ENCODE measurements at regions of chr10 and their contacts with region 1.

Region 1: DNA sequence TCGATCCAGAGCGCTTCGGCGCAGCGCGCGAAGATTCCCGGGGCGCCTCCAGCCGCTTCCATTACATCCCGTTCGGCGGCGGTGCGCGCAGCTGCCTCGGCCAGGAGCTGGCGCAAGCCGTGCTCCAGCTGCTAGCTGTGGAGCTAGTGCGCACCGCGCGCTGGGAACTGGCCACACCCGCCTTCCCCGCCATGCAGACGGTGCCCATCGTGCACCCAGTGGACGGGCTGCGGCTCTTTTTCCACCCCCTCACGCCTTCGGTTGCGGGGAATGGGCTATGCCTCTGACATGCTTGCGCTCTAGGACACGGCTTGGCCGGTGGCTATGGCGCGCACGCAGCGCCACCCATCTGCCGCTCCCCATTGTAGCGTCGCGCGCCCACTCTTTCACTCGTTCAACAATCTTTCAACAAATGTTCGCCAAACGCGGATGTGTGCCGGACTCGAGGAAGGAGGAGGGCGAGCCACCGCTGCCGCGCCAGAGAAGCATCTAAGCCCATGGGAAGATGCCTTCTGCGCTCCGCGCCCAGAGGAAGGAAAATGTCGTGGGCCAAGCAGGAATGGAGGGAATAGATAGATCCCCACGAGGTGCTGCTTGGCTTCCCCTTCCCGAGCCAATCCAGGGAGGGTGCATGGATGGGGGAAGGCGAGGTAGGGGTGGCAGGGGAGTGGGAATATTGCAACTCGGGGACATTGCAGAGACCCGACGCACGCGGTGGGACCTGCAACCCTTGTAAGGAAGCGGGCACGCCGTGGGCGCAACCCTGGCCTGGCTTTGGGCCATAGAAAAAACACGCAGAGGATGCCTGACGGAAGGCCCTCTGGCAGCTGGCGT is 5.1 kb upstream of the CYP26A1 start:
- DNase-seq: peak in 1 of 2 experiments; percentile 82
- H3K4me3 ChIP-seq: peak overlapping the region; percentile 29 to 52 (median 38)
- H3K27ac ChIP-seq: no peak overlapping the region
- H3K4me1 ChIP-seq: peaks cover 0 to 32% (median 22%) of the 10 kb centered on the region in 4 experiments; a peak in 6 of 7 replicates
- H3K27me3 ChIP-seq: peaks cover 96 to 100% (median 99%) of the 10 kb centered on the region in 4 experiments
- CTCF ChIP-seq: peak in 2 of 3 experiments; percentile 17 to 39; a peak in 3 of 4 replicates
- EP300 ChIP-seq: no peak
- POLR2A ChIP-seq: no peak
- RAD21 ChIP-seq: peak in 1 of 2 experiments; percentile 28; a peak in 1 of 4 replicates

Region 2: GRCh38 chr10:92886334-92886961 is 182.2 kb before region 1 on chr10:
- CTCF ChIA-PET with region 1: interaction called, 13 read pairs
- POLR2A ChIA-PET with region 1: no interaction called
- DNase-seq: no peak
- H3K4me3 ChIP-seq: no peak overlapping the region
- H3K27ac ChIP-seq: no peak overlapping the region
- H3K4me1 ChIP-seq: no peaks in the 10 kb centered on the region; a peak in 1 of 7 replicates
- H3K27me3 ChIP-seq: no peaks in the 10 kb centered on the region
- CTCF ChIP-seq: no peak
- EP300 ChIP-seq: no peak
- POLR2A ChIP-seq: no peak
- RAD21 ChIP-seq: no peak

Region 3: GRCh38 chr10:93006435-93007039 is 62.1 kb before region 1 on chr10:
- CTCF ChIA-PET with region 1: interaction called, 20 read pairs
- POLR2A ChIA-PET with region 1: no interaction called
- DNase-seq: no peak
- H3K4me3 ChIP-seq: no peak overlapping the region
- H3K27ac ChIP-seq: no peak overlapping the region
- H3K4me1 ChIP-seq: no peaks in the 10 kb centered on the region
- H3K27me3 ChIP-seq: no peaks in the 10 kb centered on the region
- CTCF ChIP-seq: peak in 2 of 3 experiments; percentile 70 to 74; a peak in 3 of 4 replicates
- EP300 ChIP-seq: no peak
- POLR2A ChIP-seq: no peak
- RAD21 ChIP-seq: peak; percentile 79 to 82

Region 4: GRCh38 chr10:93115661-93116383 is 47.2 kb after region 1 on chr10:
- CTCF ChIA-PET with region 1: no interaction called
- POLR2A ChIA-PET with region 1: no interaction called
- DNase-seq: peak; percentile 53 to 94
- H3K4me3 ChIP-seq: no peak overlapping the region
- H3K27ac ChIP-seq: no peak overlapping the region; the same call in 1 of the 2 replicates
- H3K4me1 ChIP-seq: no peaks in the 10 kb centered on the region
- H3K27me3 ChIP-seq: peaks cover 0 to 2% (median 0%) of the 10 kb centered on the region in 4 experiments; a peak in 1 of 7 replicates
- CTCF ChIP-seq: peak; percentile 69 to 77 (median 72)
- EP300 ChIP-seq: no peak
- POLR2A ChIP-seq: no peak
- RAD21 ChIP-seq: peak; percentile 68 to 76